ENCODE measurements at regions of chr2 and their contacts with region 1.

Region 1: GRCh38 chr2:219294356-219295351 is 14.5 kb downstream of the PTPRN start:
- DNase-seq: peak; percentile 84
- H3K27ac ChIP-seq: peak overlapping the region; percentile 67
- CTCF ChIP-seq: peak; percentile 97

Region 2: DNA sequence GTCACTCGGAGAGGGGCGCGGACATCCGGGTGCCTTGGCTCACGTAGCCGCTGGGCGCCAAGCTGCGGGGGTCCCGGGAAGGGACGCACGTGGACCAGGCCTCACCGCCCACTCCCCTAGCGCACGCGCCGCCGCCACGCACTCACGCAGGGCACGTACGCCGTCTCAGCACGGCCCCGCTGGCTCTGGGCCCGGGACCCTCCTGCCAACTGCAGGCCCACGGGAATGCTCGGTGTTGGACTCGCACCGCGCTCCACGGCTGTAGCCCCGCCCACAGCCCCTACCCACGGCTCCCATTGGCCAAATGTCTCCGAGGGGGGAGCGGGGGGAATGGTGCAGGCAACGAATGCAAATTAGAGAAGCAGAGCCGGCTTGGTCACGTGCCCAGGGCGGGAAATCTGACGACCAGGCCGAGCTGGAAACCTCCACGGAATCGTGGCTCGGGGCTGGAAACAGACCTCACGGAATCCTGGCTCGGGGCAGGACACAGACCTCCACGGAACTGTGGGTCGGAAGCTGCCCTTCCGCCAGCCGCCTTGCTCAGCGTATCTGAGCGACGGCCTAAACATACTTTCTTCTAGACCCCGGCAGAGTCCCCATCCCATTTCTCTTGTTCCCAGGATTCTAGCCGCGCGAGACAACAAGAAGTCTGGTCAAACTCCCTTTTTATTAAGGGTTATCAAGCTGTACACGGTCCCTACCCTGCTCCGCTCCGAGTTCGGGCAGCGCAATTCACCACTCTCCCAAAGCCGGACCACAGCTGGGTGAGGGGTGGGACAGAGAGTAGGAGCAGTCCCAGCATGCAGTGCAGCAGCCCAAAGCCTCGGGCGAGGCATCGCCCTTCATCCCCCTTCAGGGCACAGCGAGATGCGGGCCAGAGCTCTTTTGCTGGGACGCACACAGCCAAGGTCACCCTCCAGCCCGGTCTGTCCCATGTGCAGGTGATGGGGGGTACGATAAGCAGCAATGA is 75.6 kb before region 1 on chr2 and contains the start of gene ABCB6:
- CTCF ChIA-PET with region 1: interaction called, 17 read pairs
- POLR2A ChIA-PET with region 1: no interaction called
- DNase-seq: peak; percentile 94
- H3K27ac ChIP-seq: peak within 1 kb of the TSS; percentile 99
- CTCF ChIP-seq: no peak

Region 3: DNA sequence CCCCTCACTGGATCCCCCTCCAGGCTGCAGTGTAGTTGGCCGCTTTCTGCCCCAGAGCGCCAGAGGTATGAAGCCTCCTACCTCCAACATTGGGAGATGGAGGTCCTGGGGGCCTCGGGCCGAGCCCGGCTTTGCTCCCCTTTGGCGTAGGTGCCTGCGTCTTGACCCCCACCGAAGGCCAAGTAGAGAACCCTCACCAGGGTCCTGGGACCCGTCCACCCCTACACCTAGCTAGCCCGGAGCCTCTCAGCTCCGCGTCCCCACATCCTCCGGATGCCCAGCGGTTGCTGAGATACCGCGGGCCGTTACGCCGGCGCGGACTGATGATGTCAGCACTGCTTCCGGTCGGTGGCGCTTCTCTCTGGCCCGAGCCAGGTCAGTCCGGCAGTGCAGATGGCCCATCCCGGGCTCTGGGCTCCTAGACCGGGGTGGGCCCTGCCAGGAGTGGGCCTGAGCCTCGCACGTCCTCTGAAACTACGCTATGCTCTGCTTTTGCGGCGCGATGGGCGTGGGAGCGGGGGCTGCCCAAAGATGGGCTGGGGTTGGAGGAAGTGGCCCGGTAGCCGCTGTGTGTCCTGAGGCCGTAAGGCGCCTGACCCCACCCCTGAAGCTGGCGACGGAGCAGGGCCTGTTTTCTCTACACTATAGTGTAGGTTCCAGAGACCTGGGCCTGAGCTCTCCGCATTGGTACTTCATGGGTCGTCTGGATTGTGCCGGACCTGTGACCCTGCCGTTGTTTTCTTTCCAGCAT is 49.3 kb before region 1 on chr2 and contains the starts of genes GLB1L and STK16:
- CTCF ChIA-PET with region 1: interaction called, 22 read pairs
- POLR2A ChIA-PET with region 1: interaction called, 4 read pairs
- DNase-seq: peak; percentile 84
- H3K27ac ChIP-seq: peak within 1 kb of the TSS; percentile 98
- CTCF ChIP-seq: no peak

Region 4: GRCh38 chr2:219253753-219254590 is 40.7 kb before region 1 on chr2 and contains the start of gene TUBA4A:
- CTCF ChIA-PET with region 1: interaction called, 22 read pairs
- POLR2A ChIA-PET with region 1: interaction called, 4 read pairs
- DNase-seq: peak; percentile 92
- H3K27ac ChIP-seq: peak within 1 kb of the TSS; percentile 98
- CTCF ChIP-seq: no peak

Region 5: DNA sequence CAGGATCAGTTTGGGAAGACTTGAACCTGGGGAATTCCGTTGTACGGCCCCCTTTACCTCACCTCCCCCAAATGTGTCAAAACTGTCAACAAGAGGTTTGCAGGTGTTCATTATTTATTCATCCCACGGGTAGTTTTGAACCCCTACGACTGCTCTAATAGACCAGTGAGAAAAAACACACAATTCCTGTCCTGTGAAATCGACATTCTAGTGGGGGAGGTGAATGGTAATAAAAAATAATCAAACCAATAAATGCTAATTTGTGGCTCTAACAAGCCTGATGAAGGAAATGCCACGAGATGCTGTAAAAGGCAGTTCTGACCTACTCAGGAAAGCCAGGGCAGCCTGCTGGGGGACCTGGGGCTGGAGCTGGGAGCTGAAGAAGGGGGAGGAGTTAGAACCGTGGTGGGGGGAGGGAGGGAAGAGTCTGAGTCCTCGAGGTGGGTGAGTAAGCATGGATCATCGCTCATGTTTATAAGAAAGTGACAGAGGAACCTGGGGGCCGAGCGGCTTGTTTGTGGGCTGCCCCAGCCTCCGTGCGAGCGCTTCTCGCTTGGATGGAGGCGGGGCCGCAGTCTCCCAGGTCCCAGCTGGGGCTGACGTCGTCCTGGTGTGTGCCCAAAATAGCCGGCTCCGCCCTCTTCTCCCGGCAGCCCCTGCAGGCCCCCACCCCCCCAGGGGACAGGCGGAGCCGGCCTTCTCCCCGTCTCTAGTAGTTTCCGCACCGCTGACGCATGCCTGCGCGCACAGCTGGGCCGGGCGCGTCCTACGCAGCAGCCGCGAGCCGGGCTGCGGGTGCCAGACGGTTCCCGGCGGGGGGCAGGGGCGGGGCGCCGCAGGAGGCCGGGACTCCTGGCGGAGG is 15.8 kb before region 1 on chr2 and contains the start of gene DNAJB2:
- CTCF ChIA-PET with region 1: interaction called, 62 read pairs
- POLR2A ChIA-PET with region 1: interaction called, 3 read pairs
- DNase-seq: peak; percentile 99
- H3K27ac ChIP-seq: peak within 1 kb of the TSS; percentile 94
- CTCF ChIP-seq: no peak

Region 6: GRCh38 chr2:219812672-219813071 is 518.0 kb after region 1 on chr2:
- CTCF ChIA-PET with region 1: no interaction called
- POLR2A ChIA-PET with region 1: no interaction called
- DNase-seq: no peak
- H3K27ac ChIP-seq: no peak overlapping the region
- CTCF ChIP-seq: no peak

Measured in RWPE1 (cell line).